ENCODE measurements at regions of chr1 and their contacts with region 1.

Region 1: GRCh38 chr1:44084998-44085675 is 33.5 kb upstream of the KLF17 start:
- DNase-seq: peak; percentile 37
- H3K4me3 ChIP-seq: no peak overlapping the region
- H3K27ac ChIP-seq: no peak overlapping the region
- H3K27me3 ChIP-seq: no peaks in the 10 kb centered on the region
- CTCF ChIP-seq: no peak

Region 2: GRCh38 chr1:44072204-44072603 is 12.9 kb before region 1 on chr1:
- CTCF ChIA-PET with region 1: no interaction called
- POLR2A ChIA-PET with region 1: no interaction called
- DNase-seq: peak; percentile 89
- H3K4me3 ChIP-seq: no peak overlapping the region
- H3K27ac ChIP-seq: no peak overlapping the region
- H3K27me3 ChIP-seq: no peaks in the 10 kb centered on the region
- CTCF ChIP-seq: no peak

Region 3: GRCh38 chr1:44220001-44220733 is 135.0 kb after region 1 on chr1:
- CTCF ChIA-PET with region 1: interaction called, 4 read pairs
- POLR2A ChIA-PET with region 1: interaction called, 12 read pairs
- DNase-seq: peak; percentile 54
- H3K4me3 ChIP-seq: no peak overlapping the region
- H3K27ac ChIP-seq: peak overlapping the region; percentile 52
- H3K27me3 ChIP-seq: no peaks in the 10 kb centered on the region
- CTCF ChIP-seq: peak; percentile 9

Region 4: DNA sequence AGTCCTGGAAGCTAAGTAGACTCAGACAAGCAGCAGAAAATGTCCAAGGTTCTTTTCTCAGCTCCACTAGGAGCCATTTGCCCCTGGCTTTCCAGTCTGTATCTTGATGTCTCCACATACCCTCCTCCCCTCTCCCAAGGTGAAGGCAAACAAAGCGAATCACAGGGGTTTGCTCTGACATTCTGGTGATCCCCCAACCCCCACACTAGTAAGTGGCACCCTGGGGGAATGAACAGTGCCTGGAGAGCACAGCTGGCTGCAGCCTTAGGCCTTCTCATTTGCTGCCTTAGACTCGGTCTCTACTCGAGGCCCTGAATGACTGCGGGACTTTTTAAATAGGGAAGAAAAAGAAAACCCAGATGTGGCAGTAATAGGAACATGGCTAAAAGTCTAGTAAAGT is 254.6 kb after region 1 on chr1:
- CTCF ChIA-PET with region 1: no interaction called
- POLR2A ChIA-PET with region 1: no interaction called
- DNase-seq: no peak
- H3K4me3 ChIP-seq: no peak overlapping the region
- H3K27ac ChIP-seq: no peak overlapping the region
- H3K27me3 ChIP-seq: no peaks in the 10 kb centered on the region
- CTCF ChIP-seq: no peak

Region 5: DNA sequence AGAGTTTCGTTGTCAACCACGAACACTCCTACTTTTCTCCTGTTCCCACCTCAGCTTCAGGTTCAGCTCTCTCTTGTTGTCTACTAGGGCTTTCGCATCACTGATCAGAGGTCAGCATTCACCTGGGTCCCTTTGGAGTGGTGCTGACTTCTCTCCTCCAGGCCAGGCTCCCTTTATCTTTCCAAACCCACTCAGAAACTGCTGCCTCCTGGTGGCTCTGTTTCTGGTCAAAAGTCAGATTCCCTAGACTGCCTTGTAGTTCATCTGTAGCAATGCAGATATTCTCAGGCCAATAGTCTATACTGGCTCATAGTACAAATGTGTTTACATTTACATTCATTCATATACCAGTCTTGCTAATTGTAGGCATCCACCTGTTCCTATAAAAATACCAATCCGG is 276.3 kb after region 1 on chr1:
- CTCF ChIA-PET with region 1: no interaction called
- POLR2A ChIA-PET with region 1: no interaction called
- DNase-seq: no peak
- H3K4me3 ChIP-seq: no peak overlapping the region
- H3K27ac ChIP-seq: no peak overlapping the region
- H3K27me3 ChIP-seq: peaks cover 22% of the 10 kb centered on the region
- CTCF ChIP-seq: peak; percentile 13; the same call in 1 of the 2 replicates